ENCODE measurements at regions of chr1 and their contacts with region 1.

Region 1: DNA sequence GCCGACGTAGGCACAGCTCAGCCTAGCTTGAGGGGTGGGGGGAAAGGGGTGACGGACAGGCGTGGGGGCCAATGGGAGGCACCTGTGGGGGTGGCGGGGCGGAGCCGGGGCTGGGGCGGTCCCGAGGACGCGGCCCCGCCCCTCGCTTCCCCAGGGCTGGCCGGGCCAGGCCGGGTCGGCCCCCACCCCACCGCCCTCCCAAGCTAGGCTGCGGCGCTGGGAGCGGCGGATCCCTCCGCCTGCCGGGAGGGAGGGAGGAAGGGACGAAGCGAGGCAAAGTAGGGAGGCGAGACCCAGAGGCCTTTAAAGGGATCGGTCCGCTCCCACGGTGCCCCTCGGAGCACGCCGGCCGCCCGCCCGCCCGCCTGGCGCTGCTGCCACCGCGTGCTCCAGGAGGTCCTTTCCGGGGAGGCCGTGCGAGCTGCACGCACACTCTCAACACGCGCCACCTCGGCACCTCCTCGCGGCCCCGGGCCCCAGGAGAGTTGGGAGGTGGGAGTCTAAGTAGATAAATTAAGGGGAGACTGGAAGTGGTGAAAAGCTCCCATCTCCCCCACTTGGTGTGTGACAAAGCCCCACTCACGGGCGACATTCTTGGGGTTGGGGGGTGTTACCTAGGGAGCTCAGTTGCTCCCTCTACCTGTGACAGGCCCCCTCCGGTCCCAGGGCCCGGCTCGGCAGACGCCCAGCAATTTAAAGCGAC is 373 bp upstream of the MEF2D start:
- DNase-seq: peak; percentile 87 to 93
- H3K4me3 ChIP-seq: peak overlapping the region; percentile 100
- H3K27ac ChIP-seq: peak overlapping the region; percentile 97
- H3K4me1 ChIP-seq: peaks cover 55% of the 10 kb centered on the region
- H3K27me3 ChIP-seq: no peaks in the 10 kb centered on the region
- CTCF ChIP-seq: peak; percentile 74

Region 2: DNA sequence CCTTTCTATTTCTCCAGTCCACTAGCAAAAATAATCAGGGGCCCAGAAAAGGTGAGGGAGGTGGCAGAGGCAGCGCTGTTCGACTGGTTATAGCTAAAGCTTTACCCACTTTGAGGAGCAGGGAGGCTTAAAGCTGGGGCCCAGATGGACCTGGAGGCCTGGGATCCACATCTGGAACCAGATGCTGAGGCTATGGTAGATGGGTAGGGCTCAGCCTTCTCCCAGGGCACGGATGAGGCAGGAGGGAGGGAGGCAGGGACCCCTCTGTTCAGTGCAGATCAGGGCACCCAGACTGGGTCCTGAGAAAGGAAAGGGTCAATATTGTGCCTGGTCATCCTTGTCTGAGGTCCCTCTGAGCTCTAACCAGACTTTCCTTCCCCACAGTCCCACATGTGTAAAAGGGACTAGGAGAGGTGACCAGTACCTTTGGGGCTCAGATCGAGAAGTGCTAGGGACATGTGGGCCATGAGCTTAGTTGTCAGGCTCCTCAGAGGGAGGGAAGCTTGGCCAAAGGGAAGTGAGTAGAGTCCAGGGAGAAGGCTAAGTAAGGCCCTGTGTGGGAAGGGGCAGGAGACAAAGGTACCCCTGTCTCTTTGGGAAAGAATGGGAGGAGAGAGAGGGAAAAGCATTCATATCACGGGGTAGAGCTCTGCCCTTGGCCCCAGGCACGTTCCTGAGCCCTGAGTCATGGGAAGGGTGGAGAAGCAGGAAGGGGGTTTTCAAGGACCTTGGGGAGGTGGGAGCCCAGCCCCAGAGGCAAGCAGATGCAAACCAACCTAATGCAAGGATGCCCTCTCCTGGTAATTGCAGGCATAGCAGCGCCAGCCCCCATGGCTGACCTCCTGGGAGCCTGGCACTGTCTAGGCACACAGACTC is 371.0 kb before region 1 on chr1:
- CTCF ChIA-PET with region 1: no interaction called
- POLR2A ChIA-PET with region 1: interaction called, 6 read pairs
- intact Hi-C with region 1: loop called (anchors 10 kb)
- DNase-seq: peak; percentile 94 to 98
- H3K4me3 ChIP-seq: peak overlapping the region; percentile 20; the same call in 1 of the 2 replicates
- H3K27ac ChIP-seq: peak overlapping the region; percentile 98
- H3K4me1 ChIP-seq: peaks cover 56% of the 10 kb centered on the region
- H3K27me3 ChIP-seq: no peaks in the 10 kb centered on the region
- CTCF ChIP-seq: peak; percentile 99

Region 3: GRCh38 chr1:156385534-156386031 is 115.4 kb before region 1 on chr1:
- CTCF ChIA-PET with region 1: interaction called, 3 read pairs
- POLR2A ChIA-PET with region 1: interaction called, 12 read pairs
- intact Hi-C with region 1: no loop called
- DNase-seq: peak in 1 of 2 experiments; percentile 45
- H3K4me3 ChIP-seq: no peak overlapping the region
- H3K27ac ChIP-seq: no peak overlapping the region
- H3K4me1 ChIP-seq: no peaks in the 10 kb centered on the region
- H3K27me3 ChIP-seq: no peaks in the 10 kb centered on the region
- CTCF ChIP-seq: peak; percentile 100

Region 4: DNA sequence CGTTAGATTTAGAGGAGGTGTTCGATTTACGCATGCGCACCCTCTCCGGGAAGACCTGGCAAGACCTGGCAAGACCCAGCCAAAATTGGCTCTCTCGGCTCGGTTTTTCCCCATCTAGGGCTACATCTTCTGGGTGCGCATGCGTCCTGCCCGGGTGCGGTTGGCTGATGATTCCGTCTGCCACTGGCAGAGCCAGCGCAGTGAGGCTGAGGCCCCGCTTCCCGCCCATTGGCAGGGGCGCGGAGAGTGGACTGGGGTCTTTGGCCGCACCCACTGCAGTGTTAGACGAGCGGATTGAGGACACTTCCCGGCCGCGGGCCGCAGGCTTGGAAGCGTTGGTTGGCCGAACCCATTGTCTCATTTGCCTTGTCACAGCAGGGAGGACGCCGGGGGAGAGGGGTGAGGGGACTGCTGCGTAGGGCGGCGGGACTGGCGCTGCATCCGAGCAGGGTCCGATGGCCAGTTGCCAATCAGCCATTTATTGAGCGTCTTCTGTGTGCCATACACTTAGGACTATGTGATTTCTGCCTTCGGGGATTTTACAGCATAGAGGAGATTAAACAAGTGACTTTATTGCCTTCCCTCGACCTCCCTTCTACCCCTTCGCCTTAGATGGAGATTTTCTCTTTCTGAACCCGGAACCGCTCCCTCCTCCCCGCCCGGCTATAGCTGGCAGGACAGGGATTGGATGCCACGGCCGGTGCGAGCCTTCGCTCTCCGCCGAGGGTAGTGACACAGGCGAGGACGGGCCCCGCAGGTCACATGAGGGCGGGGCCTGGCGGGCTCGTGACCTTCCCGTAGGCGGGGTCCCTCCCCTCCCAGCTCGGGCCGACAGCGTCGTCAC is 44.1 kb before region 1 on chr1:
- CTCF ChIA-PET with region 1: interaction called, 6 read pairs
- POLR2A ChIA-PET with region 1: interaction called, 34 read pairs
- intact Hi-C with region 1: loop called (anchors 1 kb)
- DNase-seq: peak; percentile 95 to 96
- H3K4me3 ChIP-seq: peak overlapping the region; percentile 66
- H3K27ac ChIP-seq: peak overlapping the region; percentile 89
- H3K4me1 ChIP-seq: peaks cover 13% of the 10 kb centered on the region
- H3K27me3 ChIP-seq: no peaks in the 10 kb centered on the region
- CTCF ChIP-seq: no peak

Region 5: GRCh38 chr1:156489166-156489934 is 11.6 kb before region 1 on chr1:
- CTCF ChIA-PET with region 1: no interaction called
- POLR2A ChIA-PET with region 1: interaction called, 3 read pairs
- intact Hi-C with region 1: loop called (anchors 1 kb)
- DNase-seq: no peak
- H3K4me3 ChIP-seq: no peak overlapping the region
- H3K27ac ChIP-seq: peak overlapping the region; percentile 16
- H3K4me1 ChIP-seq: peaks cover 42% of the 10 kb centered on the region
- H3K27me3 ChIP-seq: no peaks in the 10 kb centered on the region
- CTCF ChIP-seq: no peak

Region 6: DNA sequence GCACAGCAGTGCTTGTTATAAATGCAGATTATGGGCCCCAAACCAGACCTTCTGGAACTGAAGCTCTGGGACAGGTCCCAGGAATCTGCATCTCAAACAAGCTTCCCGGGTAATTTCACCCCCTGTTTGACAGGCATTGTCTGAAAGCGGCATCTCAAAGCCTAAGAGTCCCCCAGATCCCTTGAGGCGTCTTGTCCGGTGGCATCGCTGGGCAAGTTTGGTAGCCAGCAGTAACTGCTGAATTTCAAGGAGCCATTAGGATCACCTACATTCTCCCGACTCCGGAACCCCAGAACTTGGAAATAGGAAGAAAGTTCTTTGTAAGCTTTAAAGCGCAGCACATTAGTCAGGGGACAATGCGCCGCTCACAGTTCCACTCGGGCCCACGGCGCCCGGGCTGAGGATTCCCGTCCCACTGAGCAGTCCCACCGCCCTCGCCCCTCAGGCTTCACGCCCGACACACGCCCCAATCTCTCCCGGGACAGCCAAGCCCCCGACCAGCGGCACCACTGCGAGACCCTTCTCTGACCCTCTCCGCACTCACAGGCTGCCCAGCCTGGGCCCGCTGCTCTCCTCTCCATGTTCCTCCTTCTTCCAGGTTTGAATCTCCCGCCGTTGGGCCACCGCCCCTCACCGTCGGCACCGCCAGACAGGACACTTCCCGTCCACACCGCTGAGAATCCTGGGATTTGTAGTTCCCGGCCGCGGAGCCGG is 71.2 kb after region 1 on chr1 and contains the start of gene IQGAP3:
- CTCF ChIA-PET with region 1: no interaction called
- POLR2A ChIA-PET with region 1: no interaction called
- intact Hi-C with region 1: loop called (anchors 5 kb)
- DNase-seq: peak; percentile 79 to 85
- H3K4me3 ChIP-seq: peak within 1 kb of the TSS; percentile 77
- H3K27ac ChIP-seq: peak within 1 kb of the TSS; percentile 76
- H3K4me1 ChIP-seq: peaks cover 14% of the 10 kb centered on the region
- H3K27me3 ChIP-seq: no peaks in the 10 kb centered on the region
- CTCF ChIP-seq: no peak
- total RNA-seq, gene IQGAP3: 63.1 and 63.4 TPM in 2 replicates

Region 7: GRCh38 chr1:157090196-157090647 is 589.3 kb after region 1 on chr1:
- CTCF ChIA-PET with region 1: no interaction called
- POLR2A ChIA-PET with region 1: no interaction called
- intact Hi-C with region 1: loop called (anchors 5 kb)
- DNase-seq: peak; percentile 62 to 76
- H3K4me3 ChIP-seq: no peak overlapping the region
- H3K27ac ChIP-seq: no peak overlapping the region
- H3K4me1 ChIP-seq: peaks cover 21% of the 10 kb centered on the region
- H3K27me3 ChIP-seq: no peaks in the 10 kb centered on the region
- CTCF ChIP-seq: peak; percentile 95